ENCODE measurements at regions of chr11 and their contacts with region 1.

Region 1: GRCh38 chr11:119373921-119374631 is 7.4 kb downstream of the USP2 start:
- DNase-seq: peak; percentile 74
- ATAC-seq: peak; percentile 55
- H3K4me3 ChIP-seq: no peak overlapping the region
- H3K27ac ChIP-seq: no peak overlapping the region
- H3K4me1 ChIP-seq: peaks cover 100% of the 10 kb centered on the region
- H3K27me3 ChIP-seq: no peaks in the 10 kb centered on the region
- CTCF ChIP-seq: peak; percentile 95
- EP300 ChIP-seq: 0 out of 4 replicates have a peak, but pooled peaks of 1 of the 2 experiments have one; percentile 9
- POLR2A ChIP-seq: no peak
- RAD21 ChIP-seq: peak; percentile 90

Region 2: GRCh38 chr11:119205574-119206510 is 168.2 kb before region 1 on chr11 and contains the start of gene CBL:
- CTCF ChIA-PET with region 1: no interaction called
- POLR2A ChIA-PET with region 1: interaction called, 4 read pairs
- in situ Hi-C with region 1: no loop called
- intact Hi-C with region 1: loop called (anchors 2 kb)
- DNase-seq: peak; percentile 80
- ATAC-seq: peak; percentile 94
- H3K4me3 ChIP-seq: peak within 1 kb of the TSS; percentile 89 to 99 (median 96)
- H3K27ac ChIP-seq: peak within 1 kb of the TSS; percentile 76
- H3K4me1 ChIP-seq: peaks cover 32% of the 10 kb centered on the region
- H3K27me3 ChIP-seq: no peaks in the 10 kb centered on the region; a peak in 1 of 5 replicates
- CTCF ChIP-seq: peak; percentile 86
- EP300 ChIP-seq: no peak
- POLR2A ChIP-seq: peak in 1 of 2 experiments; percentile 53; a peak in 1 of 4 replicates
- RAD21 ChIP-seq: peak; percentile 31; the same call in 1 of the 2 replicates
- total RNA-seq, gene CBL: 7.4 and 11.0 TPM in 2 replicates

Region 3: GRCh38 chr11:119318304-119319122 is 55.6 kb before region 1 on chr11:
- CTCF ChIA-PET with region 1: interaction called, 5 read pairs
- POLR2A ChIA-PET with region 1: interaction called, 12 read pairs
- in situ Hi-C with region 1: no loop called
- intact Hi-C with region 1: no loop called
- DNase-seq: peak; percentile 52
- ATAC-seq: peak; percentile 34
- H3K4me3 ChIP-seq: peak overlapping the region; percentile 53 to 77 (median 76)
- H3K27ac ChIP-seq: no peak overlapping the region
- H3K4me1 ChIP-seq: peaks cover 73% of the 10 kb centered on the region
- H3K27me3 ChIP-seq: peaks cover 0 to 9% of the 10 kb centered on the region in 2 experiments; a peak in 1 of 5 replicates
- CTCF ChIP-seq: no peak
- EP300 ChIP-seq: no peak
- POLR2A ChIP-seq: peak in 1 of 2 experiments; percentile 41; a peak in 1 of 4 replicates
- RAD21 ChIP-seq: no peak

Region 4: DNA sequence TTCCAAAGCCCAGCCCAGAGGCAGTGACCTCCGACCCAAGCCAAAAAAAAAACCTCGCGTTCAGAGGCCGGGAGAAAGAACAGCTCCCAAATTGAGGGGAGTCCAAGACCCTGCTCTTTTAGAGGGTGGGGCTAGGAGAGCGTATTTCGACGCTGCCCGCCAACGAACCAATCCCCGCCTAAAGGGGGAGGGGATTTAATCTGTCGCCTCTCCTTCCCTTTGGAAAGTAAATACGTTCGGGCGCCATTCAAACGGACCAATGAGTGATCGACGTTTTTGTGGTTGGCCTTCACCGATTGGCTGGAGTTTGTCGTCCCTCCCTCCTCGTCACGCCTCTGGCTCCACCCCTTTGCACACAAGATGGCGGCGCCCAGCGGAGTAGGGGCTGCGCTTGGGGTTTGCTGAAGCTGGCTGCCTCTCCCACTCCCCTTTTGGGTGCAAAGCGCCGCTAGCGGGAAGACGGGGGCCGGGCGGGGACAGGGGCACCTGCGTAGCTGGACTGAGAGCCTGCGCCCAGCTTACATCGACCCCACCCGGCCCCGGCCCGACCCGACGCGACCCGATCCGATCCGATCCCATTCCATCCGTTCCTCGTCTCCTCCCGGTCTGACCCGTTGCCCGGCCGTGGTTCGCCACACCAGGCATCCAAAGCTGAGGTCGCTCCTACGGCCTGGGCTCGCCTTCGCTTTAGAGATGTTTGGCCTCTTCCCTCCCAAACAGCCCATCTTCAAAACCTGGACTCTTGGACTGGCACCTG is 39.7 kb before region 1 on chr11 and contains the start of gene RNF26:
- CTCF ChIA-PET with region 1: interaction called, 17 read pairs
- POLR2A ChIA-PET with region 1: interaction called, 31 read pairs
- in situ Hi-C with region 1: loop called (anchors 5 kb)
- intact Hi-C with region 1: loop called (anchors 1 kb)
- DNase-seq: peak; percentile 97
- ATAC-seq: peak; percentile 87
- H3K4me3 ChIP-seq: peak within 1 kb of the TSS; percentile 78 to 94 (median 87)
- H3K27ac ChIP-seq: peak within 1 kb of the TSS; percentile 71
- H3K4me1 ChIP-seq: peaks cover 55% of the 10 kb centered on the region
- H3K27me3 ChIP-seq: no peaks in the 10 kb centered on the region; a peak in 1 of 5 replicates
- CTCF ChIP-seq: no peak
- EP300 ChIP-seq: no peak
- POLR2A ChIP-seq: peak; percentile 79 to 84
- RAD21 ChIP-seq: no peak
- total RNA-seq, gene RNF26: 11.9 and 20.8 TPM in 2 replicates

Region 5: DNA sequence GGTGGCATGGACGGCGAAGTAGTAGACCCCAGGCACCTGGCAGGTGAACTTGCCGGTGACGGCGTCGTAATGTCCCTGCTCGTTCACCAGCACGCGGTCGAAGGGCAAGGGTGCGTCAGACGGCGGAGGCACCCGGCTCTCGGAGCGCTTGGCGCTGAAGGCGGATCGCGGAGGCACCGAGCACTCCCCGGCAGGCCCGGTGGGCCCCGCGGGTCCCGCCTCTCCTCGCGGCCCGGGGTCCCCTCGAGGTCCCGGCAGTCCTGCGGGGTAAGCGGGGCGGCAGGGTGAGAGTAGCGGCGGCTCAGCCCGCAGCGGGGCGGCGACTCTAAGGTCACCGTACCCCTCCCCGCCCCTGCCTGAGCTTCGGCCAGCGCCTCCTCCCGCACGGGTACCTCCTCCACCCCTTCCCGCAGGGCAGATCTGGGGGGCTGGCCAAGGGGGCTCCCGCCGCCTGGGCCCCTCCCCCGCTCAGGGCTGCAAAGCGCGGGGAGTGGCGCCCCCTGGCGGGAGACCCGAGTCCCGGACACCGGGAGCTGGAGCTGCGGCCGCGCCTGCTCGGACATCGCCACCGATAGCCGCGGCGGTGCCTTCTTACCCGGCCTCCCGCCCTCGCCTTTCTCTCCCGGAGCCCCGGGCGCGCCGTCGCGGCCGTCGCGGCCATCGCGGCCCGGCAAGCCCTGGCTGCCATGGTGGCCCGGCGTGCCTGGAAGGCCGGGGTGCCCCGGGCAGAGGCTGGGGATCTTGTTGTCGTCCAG is 34.3 kb before region 1 on chr11:
- CTCF ChIA-PET with region 1: interaction called, 17 read pairs
- POLR2A ChIA-PET with region 1: interaction called, 31 read pairs
- in situ Hi-C with region 1: loop called (anchors 5 kb)
- intact Hi-C with region 1: loop called (anchors 1 kb)
- DNase-seq: peak; percentile 28
- ATAC-seq: peak; percentile 61
- H3K4me3 ChIP-seq: peak overlapping the region; percentile 57 to 79 (median 62); a peak in 5 of 6 replicates
- H3K27ac ChIP-seq: no peak overlapping the region
- H3K4me1 ChIP-seq: peaks cover 51% of the 10 kb centered on the region
- H3K27me3 ChIP-seq: peaks cover 2 to 40% of the 10 kb centered on the region in 2 experiments; a peak in 4 of 5 replicates
- CTCF ChIP-seq: peak; percentile 81
- EP300 ChIP-seq: no peak
- POLR2A ChIP-seq: no peak
- RAD21 ChIP-seq: peak; percentile 76

Region 6: GRCh38 chr11:119356349-119357031 is 17.6 kb before region 1 on chr11:
- CTCF ChIA-PET with region 1: interaction called, 3 read pairs
- POLR2A ChIA-PET with region 1: interaction called, 21 read pairs
- in situ Hi-C with region 1: no loop called
- intact Hi-C with region 1: loop called (anchors 2 kb)
- DNase-seq: no peak
- ATAC-seq: no peak
- H3K4me3 ChIP-seq: no peak overlapping the region
- H3K27ac ChIP-seq: no peak overlapping the region
- H3K4me1 ChIP-seq: peaks cover 67% of the 10 kb centered on the region
- H3K27me3 ChIP-seq: no peaks in the 10 kb centered on the region
- CTCF ChIP-seq: peak; percentile 42; the same call in 1 of the 2 replicates
- EP300 ChIP-seq: no peak
- POLR2A ChIP-seq: no peak
- RAD21 ChIP-seq: no peak

Region 7: GRCh38 chr11:119434591-119435330 is 60.7 kb after region 1 on chr11:
- CTCF ChIA-PET with region 1: no interaction called
- POLR2A ChIA-PET with region 1: no interaction called
- in situ Hi-C with region 1: no loop called
- intact Hi-C with region 1: no loop called
- DNase-seq: no peak
- ATAC-seq: no peak
- H3K4me3 ChIP-seq: no peak overlapping the region
- H3K27ac ChIP-seq: no peak overlapping the region
- H3K4me1 ChIP-seq: no peaks in the 10 kb centered on the region
- H3K27me3 ChIP-seq: no peaks in the 10 kb centered on the region
- CTCF ChIP-seq: no peak
- EP300 ChIP-seq: no peak
- POLR2A ChIP-seq: no peak
- RAD21 ChIP-seq: no peak

Region 8: GRCh38 chr11:119474682-119475596 is 100.9 kb after region 1 on chr11:
- CTCF ChIA-PET with region 1: interaction called, 5 read pairs
- POLR2A ChIA-PET with region 1: no interaction called
- in situ Hi-C with region 1: loop called (anchors 5 kb)
- intact Hi-C with region 1: no loop called
- DNase-seq: peak; percentile 56
- ATAC-seq: peak; percentile 62
- H3K4me3 ChIP-seq: no peak overlapping the region
- H3K27ac ChIP-seq: no peak overlapping the region
- H3K4me1 ChIP-seq: peaks cover 42% of the 10 kb centered on the region
- H3K27me3 ChIP-seq: no peaks in the 10 kb centered on the region; a peak in 1 of 5 replicates
- CTCF ChIP-seq: peak; percentile 92
- EP300 ChIP-seq: no peak
- POLR2A ChIP-seq: no peak
- RAD21 ChIP-seq: peak; percentile 82

Measured in HepG2 (cell line).